ENCODE measurements at regions of chr5 and their contacts with region 1.

Region 1: GRCh38 chr5:35003018-35003957 is 44.5 kb downstream of the AGXT2 start:
- DNase-seq: peak; percentile 69
- H3K4me3 ChIP-seq: peak overlapping the region in 1 of 2 experiments; percentile 35; a peak in 1 of 4 replicates
- H3K27ac ChIP-seq: no peak overlapping the region
- H3K4me1 ChIP-seq: peaks cover 0 to 2% of the 10 kb centered on the region in 2 experiments; a peak in 1 of 4 replicates
- H3K27me3 ChIP-seq: peaks cover 14% of the 10 kb centered on the region; the same call in 1 of the 2 replicates
- CTCF ChIP-seq: peak; percentile 94
- EP300 ChIP-seq: no peak
- RAD21 ChIP-seq: peak; percentile 82

Region 2: DNA sequence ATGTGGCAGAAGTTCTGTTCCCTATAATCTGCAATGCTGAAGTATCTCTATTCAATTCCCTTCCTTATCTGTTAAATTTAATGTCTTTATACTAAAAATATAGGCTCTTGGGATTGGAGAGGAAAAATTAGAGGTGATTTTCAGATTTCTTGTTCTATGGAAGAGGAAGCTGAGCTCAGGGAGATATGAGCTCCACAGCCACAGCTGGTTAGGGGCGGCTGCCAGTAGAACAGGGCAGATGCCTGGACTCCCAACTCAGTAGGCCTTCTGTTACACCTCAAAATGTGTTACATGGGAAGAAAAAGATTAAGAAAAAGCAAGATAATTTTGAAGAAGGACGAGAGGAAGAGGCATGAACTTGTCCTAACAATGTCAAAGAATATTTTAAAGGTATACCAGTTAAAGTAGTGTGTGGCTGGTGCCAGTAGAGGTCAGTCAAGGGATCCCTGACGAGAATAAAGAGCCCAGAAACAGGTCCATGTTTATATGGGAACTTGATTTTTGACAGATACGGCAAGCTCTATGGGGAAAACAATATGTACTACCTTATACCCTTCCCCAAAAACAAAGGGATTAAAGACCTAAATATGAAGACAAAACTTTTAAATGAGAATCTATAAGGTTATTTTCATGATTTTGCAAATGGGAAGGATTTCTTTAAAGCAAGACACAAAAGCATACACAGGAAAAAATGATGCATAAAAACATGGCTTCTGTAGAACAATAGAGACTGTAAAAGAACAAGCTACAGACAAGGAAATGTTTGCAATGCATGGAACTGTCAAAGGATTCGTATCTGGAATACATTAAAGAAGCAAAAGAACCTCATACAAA is 45.2 kb before region 1 on chr5:
- CTCF ChIA-PET with region 1: interaction called, 11 read pairs
- POLR2A ChIA-PET with region 1: no interaction called
- DNase-seq: peak; percentile 61
- H3K4me3 ChIP-seq: no peak overlapping the region
- H3K27ac ChIP-seq: no peak overlapping the region
- H3K4me1 ChIP-seq: no peaks in the 10 kb centered on the region
- H3K27me3 ChIP-seq: no peaks in the 10 kb centered on the region
- CTCF ChIP-seq: peak; percentile 65
- EP300 ChIP-seq: no peak
- RAD21 ChIP-seq: peak; percentile 55

Region 3: GRCh38 chr5:34991486-34992238 is 11.6 kb before region 1 on chr5:
- CTCF ChIA-PET with region 1: interaction called, 17 read pairs
- POLR2A ChIA-PET with region 1: no interaction called
- DNase-seq: no peak
- H3K4me3 ChIP-seq: no peak overlapping the region
- H3K27ac ChIP-seq: no peak overlapping the region
- H3K4me1 ChIP-seq: no peaks in the 10 kb centered on the region
- H3K27me3 ChIP-seq: peaks cover 11% of the 10 kb centered on the region; the same call in 1 of the 2 replicates
- CTCF ChIP-seq: no peak
- EP300 ChIP-seq: no peak
- RAD21 ChIP-seq: no peak

Region 4: DNA sequence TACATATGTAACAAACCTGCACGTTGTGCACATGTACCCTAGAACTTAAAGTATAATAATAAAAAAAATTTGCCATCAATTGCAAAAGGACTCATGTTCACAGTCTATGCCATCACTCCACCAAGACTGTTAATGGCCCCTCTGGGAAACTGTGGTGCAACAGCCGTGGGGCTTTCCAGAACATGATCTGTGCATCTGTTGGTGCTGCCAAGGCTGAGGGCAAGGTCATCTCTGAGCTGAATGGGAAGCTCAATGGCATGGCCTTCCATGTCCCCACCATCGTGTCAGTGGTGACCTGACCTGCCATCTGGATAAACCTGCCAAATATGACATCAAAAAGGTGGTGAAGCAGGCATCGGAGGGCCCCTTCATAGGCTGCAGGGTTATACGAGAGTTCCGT is 77.8 kb after region 1 on chr5:
- CTCF ChIA-PET with region 1: no interaction called
- POLR2A ChIA-PET with region 1: no interaction called
- DNase-seq: no peak
- H3K4me3 ChIP-seq: no peak overlapping the region
- H3K27ac ChIP-seq: no peak overlapping the region
- H3K4me1 ChIP-seq: no peaks in the 10 kb centered on the region
- H3K27me3 ChIP-seq: no peaks in the 10 kb centered on the region; the same call in 1 of the 2 replicates
- CTCF ChIP-seq: no peak
- EP300 ChIP-seq: no peak
- RAD21 ChIP-seq: no peak